Activated T-helper 2 cell treated with anti-CD3 and anti-CD28 coated beads, Interferon-gamma antibody, Interleukin-2, Interleukin-4, amounts not matched to agents 10 μg/mL and 5 μg/mL and 100 μg/mL, durations not matched to agents 14 hours and 24 hours and 36 hours (primary cell): ENCODE measurements at regions of chr10 and their contacts with region 1.

Region 1: GRCh38 chr10:110354322-110354766 is 49.6 kb upstream of the SMNDC1 start:
- DNase-seq: peak; percentile 66
- H3K4me3 Mint-ChIP-seq: peak overlapping the region; percentile 60
- H3K27ac Mint-ChIP-seq: peak overlapping the region; percentile 98
- H3K4me1 Mint-ChIP-seq: peaks cover 72% of the 10 kb centered on the region
- H3K27me3 Mint-ChIP-seq: no peaks in the 10 kb centered on the region

Region 2: GRCh38 chr10:110326351-110327032 is 27.9 kb before region 1 on chr10:
- intact Hi-C with region 1: loop called (anchors 1 kb)
- DNase-seq: no peak
- H3K4me3 Mint-ChIP-seq: no peak overlapping the region
- H3K27ac Mint-ChIP-seq: peak overlapping the region; percentile 12
- H3K4me1 Mint-ChIP-seq: peaks cover 46% of the 10 kb centered on the region
- H3K27me3 Mint-ChIP-seq: no peaks in the 10 kb centered on the region

Region 3: GRCh38 chr10:110414563-110415309 is 60.4 kb after region 1 on chr10:
- intact Hi-C with region 1: loop called (anchors 1 kb)
- DNase-seq: peak; percentile 84
- H3K4me3 Mint-ChIP-seq: peak overlapping the region; percentile 61
- H3K27ac Mint-ChIP-seq: peak overlapping the region; percentile 90
- H3K4me1 Mint-ChIP-seq: peaks cover 70% of the 10 kb centered on the region
- H3K27me3 Mint-ChIP-seq: no peaks in the 10 kb centered on the region

Region 4: GRCh38 chr10:110497438-110498086 is 143.2 kb after region 1 on chr10 and contains the start of gene DUSP5:
- intact Hi-C with region 1: loop called (anchors 1 kb)
- DNase-seq: peak; percentile 95
- H3K4me3 Mint-ChIP-seq: peak within 1 kb of the TSS; percentile 97
- H3K27ac Mint-ChIP-seq: peak within 1 kb of the TSS; percentile 84
- H3K4me1 Mint-ChIP-seq: peaks cover 47% of the 10 kb centered on the region
- H3K27me3 Mint-ChIP-seq: no peaks in the 10 kb centered on the region
- total RNA-seq, gene DUSP5: 84.3 and 86.2 TPM in 2 replicates

Region 5: GRCh38 chr10:110535958-110536891 is 181.9 kb after region 1 on chr10:
- intact Hi-C with region 1: loop called (anchors 1 kb)
- DNase-seq: peak; percentile 42
- H3K4me3 Mint-ChIP-seq: peak overlapping the region; percentile 27
- H3K27ac Mint-ChIP-seq: peak overlapping the region; percentile 92
- H3K4me1 Mint-ChIP-seq: peaks cover 55% of the 10 kb centered on the region
- H3K27me3 Mint-ChIP-seq: no peaks in the 10 kb centered on the region

Region 6: GRCh38 chr10:110567201-110568054 is 213.1 kb after region 1 on chr10 and contains the start of gene SMC3:
- intact Hi-C with region 1: loop called (anchors 1 kb)
- DNase-seq: peak; percentile 90
- H3K4me3 Mint-ChIP-seq: peak within 1 kb of the TSS; percentile 90
- H3K27ac Mint-ChIP-seq: peak within 1 kb of the TSS; percentile 98
- H3K4me1 Mint-ChIP-seq: peaks cover 51% of the 10 kb centered on the region
- H3K27me3 Mint-ChIP-seq: peaks cover 9% of the 10 kb centered on the region
- total RNA-seq, gene SMC3: 78.4 and 78.8 TPM in 2 replicates